ENCODE measurements at regions of chr10 and their contacts with region 1.

Region 1: GRCh38 chr10:110016039-110016438 is 8.3 kb downstream of the ADD3 start:
- DNase-seq: peak; percentile 8 to 52
- ATAC-seq: peak; percentile 78 to 85; a peak in 4 of 6 replicates
- H3K4me3 ChIP-seq: no peak overlapping the region
- H3K27ac ChIP-seq: no peak overlapping the region
- H3K4me1 ChIP-seq: 0 out of 3 replicates have a peak, but pooled peaks cover 5% of the 10 kb centered on the region
- CTCF ChIP-seq: peak; percentile 52; the same call in 2 of the 3 replicates
- EP300 ChIP-seq: no peak
- POLR2A ChIP-seq: no peak
- RAD21 ChIP-seq: peak; percentile 58 to 64

Region 2: GRCh38 chr10:109956454-109957091 is 59.5 kb before region 1 on chr10:
- CTCF ChIA-PET with region 1: interaction called, 10 read pairs
- POLR2A ChIA-PET with region 1: no interaction called
- DNase-seq: peak; percentile 69 to 82
- ATAC-seq: peak; percentile 86 to 99
- H3K4me3 ChIP-seq: no peak overlapping the region
- H3K27ac ChIP-seq: no peak overlapping the region
- H3K4me1 ChIP-seq: peaks cover 1% of the 10 kb centered on the region; the same call in 1 of the 3 replicates
- CTCF ChIP-seq: peak; percentile 60
- EP300 ChIP-seq: no peak
- POLR2A ChIP-seq: no peak
- RAD21 ChIP-seq: peak; percentile 52 to 69

Region 3: DNA sequence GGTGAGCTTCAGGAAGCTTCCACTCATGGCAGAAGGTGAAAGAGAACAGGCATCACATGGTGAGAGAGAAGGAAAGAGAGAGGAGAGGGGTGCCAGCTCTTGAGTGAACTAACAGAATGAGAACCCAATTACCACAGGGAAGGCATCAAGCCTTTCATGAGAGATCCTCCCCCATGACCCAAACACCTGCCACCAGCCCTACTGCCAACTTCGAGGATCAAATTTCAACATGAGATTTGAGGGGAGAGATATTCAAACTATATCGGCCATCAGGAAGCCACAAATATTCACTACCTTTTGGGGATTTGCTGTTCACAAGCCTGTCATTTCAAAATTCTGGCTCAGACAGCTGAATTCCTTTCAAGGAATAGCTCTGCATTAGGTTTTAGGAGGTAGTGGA is 328.6 kb after region 1 on chr10:
- CTCF ChIA-PET with region 1: no interaction called
- POLR2A ChIA-PET with region 1: no interaction called
- DNase-seq: no peak
- ATAC-seq: no peak
- H3K4me3 ChIP-seq: no peak overlapping the region
- H3K27ac ChIP-seq: peak overlapping the region in 1 of 2 experiments; percentile 45; a peak in 2 of 6 replicates
- H3K4me1 ChIP-seq: no peaks in the 10 kb centered on the region
- CTCF ChIP-seq: no peak
- EP300 ChIP-seq: no peak
- POLR2A ChIP-seq: no peak
- RAD21 ChIP-seq: no peak

Measured in A549 (cell line).